WTC11 (cell line): ENCODE measurements at regions of chr19 and their contacts with region 1.

Region 1: DNA sequence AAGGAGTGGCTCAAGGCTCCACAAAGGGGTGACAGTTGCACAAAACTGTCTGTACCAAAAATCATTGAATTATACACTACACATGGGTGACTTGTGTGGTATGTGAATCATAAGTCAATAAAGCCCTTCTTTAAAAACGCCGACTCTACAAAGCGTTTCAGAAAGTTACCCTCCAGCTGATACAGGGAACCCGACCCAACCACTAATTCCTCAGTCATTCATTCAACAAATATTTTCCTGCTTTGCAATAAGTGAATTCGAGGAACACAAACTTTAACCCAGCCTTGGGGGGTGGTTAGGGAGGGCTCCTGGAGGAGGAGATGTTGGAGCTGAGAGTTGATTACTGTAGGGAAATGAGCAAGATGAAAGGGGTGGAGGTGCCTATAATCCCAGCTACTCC is 32.0 kb downstream of the LTBP4 start:
- DNase-seq: no peak
- ATAC-seq: no peak
- H3K4me3 Mint-ChIP-seq: peak overlapping the region; percentile 32; the same call in 1 of the 2 replicates
- H3K27ac Mint-ChIP-seq: no peak overlapping the region
- H3K4me1 Mint-ChIP-seq: peaks cover 44% of the 10 kb centered on the region
- H3K27me3 Mint-ChIP-seq: peaks cover 51% of the 10 kb centered on the region
- CTCF ChIP-seq: no peak

Region 2: GRCh38 chr19:40542202-40542859 is 90.9 kb before region 1 on chr19:
- CTCF ChIA-PET with region 1: interaction called, 33 read pairs
- POLR2A ChIA-PET with region 1: no interaction called
- DNase-seq: no peak
- ATAC-seq: no peak
- H3K4me3 Mint-ChIP-seq: no peak overlapping the region
- H3K27ac Mint-ChIP-seq: no peak overlapping the region
- H3K4me1 Mint-ChIP-seq: no peaks in the 10 kb centered on the region
- H3K27me3 Mint-ChIP-seq: peaks cover 31% of the 10 kb centered on the region
- CTCF ChIP-seq: no peak

Region 3: GRCh38 chr19:40576585-40577451 is 56.4 kb before region 1 on chr19 and contains the start of gene SHKBP1:
- CTCF ChIA-PET with region 1: interaction called, 11 read pairs
- POLR2A ChIA-PET with region 1: no interaction called
- DNase-seq: peak; percentile 96
- ATAC-seq: peak; percentile 89
- H3K4me3 Mint-ChIP-seq: peak within 1 kb of the TSS; percentile 93
- H3K27ac Mint-ChIP-seq: peak within 1 kb of the TSS; percentile 91
- H3K4me1 Mint-ChIP-seq: peaks cover 17% of the 10 kb centered on the region
- H3K27me3 Mint-ChIP-seq: peaks cover 21% of the 10 kb centered on the region
- CTCF ChIP-seq: no peak
- total RNA-seq, gene SHKBP1: 71.7 to 82.1 TPM (median 76.9 TPM) in 3 replicates

Region 4: DNA sequence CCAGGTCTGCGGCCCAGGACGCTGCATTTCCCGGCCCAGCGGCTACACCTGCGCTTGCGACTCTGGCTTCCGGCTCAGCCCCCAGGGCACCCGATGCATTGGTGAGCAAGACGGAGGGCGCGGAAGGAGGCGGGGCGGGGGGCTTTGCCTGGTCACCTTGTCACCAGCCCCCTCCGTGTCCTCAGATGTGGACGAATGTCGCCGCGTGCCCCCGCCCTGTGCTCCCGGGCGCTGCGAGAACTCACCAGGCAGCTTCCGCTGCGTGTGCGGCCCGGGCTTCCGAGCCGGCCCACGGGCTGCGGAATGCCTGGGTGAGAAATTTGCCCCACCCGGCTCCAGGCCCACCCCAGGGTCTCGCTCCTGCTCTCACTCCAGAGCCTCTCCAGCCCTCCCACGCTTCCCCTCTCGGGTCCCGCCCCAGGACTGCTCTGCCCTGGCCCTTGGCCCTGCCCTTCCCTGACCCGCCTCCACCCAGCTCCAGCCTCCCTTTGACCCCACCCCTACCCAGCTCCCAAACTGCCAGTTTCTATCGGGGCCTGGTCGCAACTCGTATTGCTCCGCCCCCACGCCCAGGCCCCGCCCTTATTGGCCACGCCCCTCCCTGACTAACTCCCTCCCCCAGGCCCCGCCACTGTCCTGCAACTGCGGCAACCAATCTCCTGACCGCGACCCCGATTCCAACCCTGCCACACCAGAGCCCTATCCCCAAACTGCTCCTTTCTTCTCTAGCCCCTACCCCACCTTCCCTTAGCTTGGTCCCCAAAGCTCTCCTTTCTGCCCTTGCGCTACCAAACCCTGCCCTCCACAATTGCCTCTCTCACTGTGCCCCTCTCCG is 23.4 kb before region 1 on chr19:
- CTCF ChIA-PET with region 1: interaction called, 101 read pairs
- POLR2A ChIA-PET with region 1: interaction called, 5 read pairs
- DNase-seq: peak; percentile 96
- ATAC-seq: peak; percentile 59
- H3K4me3 Mint-ChIP-seq: peak overlapping the region; percentile 73
- H3K27ac Mint-ChIP-seq: no peak overlapping the region
- H3K4me1 Mint-ChIP-seq: peaks cover 40% of the 10 kb centered on the region
- H3K27me3 Mint-ChIP-seq: peaks cover 81% of the 10 kb centered on the region
- CTCF ChIP-seq: no peak

Region 5: DNA sequence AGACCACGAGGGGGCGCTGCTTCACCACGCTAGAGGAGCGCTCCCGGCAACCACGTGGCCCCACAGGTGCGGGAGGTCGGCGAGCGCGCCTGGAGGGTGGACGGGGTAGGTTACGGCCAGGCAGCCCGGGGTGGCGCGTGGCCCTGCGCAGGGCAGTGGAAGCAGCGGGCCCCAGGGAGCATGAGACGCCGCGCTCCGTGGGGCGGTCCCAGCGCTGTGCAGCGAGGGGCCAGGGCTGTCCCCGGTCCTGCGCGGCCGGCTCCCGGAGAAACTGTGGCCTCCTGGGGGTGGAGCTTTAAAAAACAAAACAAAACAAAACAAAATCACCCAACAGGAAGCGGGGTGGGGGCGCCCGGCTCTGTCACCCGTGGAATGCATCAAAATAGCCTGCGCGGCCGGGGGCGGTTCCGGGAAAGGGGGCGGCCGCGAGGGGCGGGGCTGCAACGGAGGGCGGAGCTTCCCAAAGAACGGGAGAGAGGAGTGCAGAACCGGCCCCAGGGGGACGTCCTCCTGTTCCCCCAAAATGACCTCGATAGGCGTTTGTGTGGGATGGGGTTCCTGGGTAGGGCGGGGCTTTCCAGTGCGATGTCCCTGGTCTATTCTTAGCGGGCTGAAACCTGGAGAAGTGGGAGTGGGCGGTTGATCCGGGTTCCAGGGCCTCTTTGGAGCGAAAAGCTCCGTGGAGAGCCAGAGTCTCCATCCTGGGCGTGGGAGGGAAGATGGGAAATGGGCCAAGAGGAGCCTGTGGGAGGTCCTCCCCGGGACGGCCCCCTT is 29.9 kb after region 1 on chr19:
- CTCF ChIA-PET with region 1: interaction called, 16 read pairs
- POLR2A ChIA-PET with region 1: no interaction called
- DNase-seq: peak; percentile 95
- ATAC-seq: peak; percentile 85
- H3K4me3 Mint-ChIP-seq: peak overlapping the region; percentile 80
- H3K27ac Mint-ChIP-seq: no peak overlapping the region
- H3K4me1 Mint-ChIP-seq: peaks cover 2% of the 10 kb centered on the region; the same call in 1 of the 2 replicates
- H3K27me3 Mint-ChIP-seq: peaks cover 18% of the 10 kb centered on the region
- CTCF ChIP-seq: peak; percentile 97

Region 6: GRCh38 chr19:40709817-40710216 is 76.6 kb after region 1 on chr19:
- CTCF ChIA-PET with region 1: no interaction called
- POLR2A ChIA-PET with region 1: no interaction called
- DNase-seq: no peak
- ATAC-seq: no peak
- H3K4me3 Mint-ChIP-seq: no peak overlapping the region
- H3K27ac Mint-ChIP-seq: no peak overlapping the region
- H3K4me1 Mint-ChIP-seq: no peaks in the 10 kb centered on the region
- H3K27me3 Mint-ChIP-seq: no peaks in the 10 kb centered on the region
- CTCF ChIP-seq: no peak